Activated CD4-positive, alpha-beta T cell treated with anti-CD3 and anti-CD28 coated beads for 36 hours (primary cell): ENCODE measurements at regions of chr15 and their contacts with region 1.

Region 1: DNA sequence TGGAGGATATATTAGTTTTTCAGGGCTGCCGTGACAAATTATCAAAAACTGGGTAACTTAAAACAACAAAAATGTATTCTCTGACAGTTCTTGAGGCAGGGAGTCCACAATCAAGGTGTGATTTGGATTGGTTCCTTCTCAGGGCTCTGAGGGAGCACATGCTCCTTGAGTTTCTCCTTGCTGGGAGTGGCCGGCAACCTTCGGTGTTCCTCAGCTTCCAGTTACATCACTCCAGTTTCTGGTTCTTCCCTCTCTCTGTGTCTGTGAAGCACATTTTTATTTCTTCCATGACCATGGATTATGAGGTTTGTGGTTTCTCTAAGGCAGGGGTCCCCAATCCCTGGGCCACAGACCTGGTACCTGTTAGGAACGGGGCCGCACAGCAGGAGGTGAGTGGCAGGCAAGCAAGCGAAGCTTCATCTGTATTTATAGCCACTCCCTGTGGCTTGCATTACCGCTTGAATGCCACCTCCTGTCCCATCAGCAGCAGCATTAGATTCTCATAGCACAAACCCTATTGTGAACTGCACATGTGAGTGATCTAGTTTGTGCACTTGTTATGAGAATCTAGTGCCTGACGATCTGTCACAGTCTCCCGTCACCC is 24.3 kb downstream of the LRRC28 start:
- DNase-seq: no peak
- ATAC-seq: no peak
- H3K4me3 Mint-ChIP-seq: no peak overlapping the region
- H3K27ac Mint-ChIP-seq: no peak overlapping the region
- H3K4me1 Mint-ChIP-seq: peaks cover 23% of the 10 kb centered on the region
- H3K27me3 Mint-ChIP-seq: no peaks in the 10 kb centered on the region

Region 2: GRCh38 chr15:98794754-98795153 is 480.9 kb before region 1 on chr15:
- CTCF ChIA-PET with region 1: no interaction called
- POLR2A ChIA-PET with region 1: no interaction called
- intact Hi-C with region 1: no loop called
- DNase-seq: no peak
- ATAC-seq: no peak
- H3K4me3 Mint-ChIP-seq: no peak overlapping the region
- H3K27ac Mint-ChIP-seq: no peak overlapping the region
- H3K4me1 Mint-ChIP-seq: peaks cover 61% of the 10 kb centered on the region
- H3K27me3 Mint-ChIP-seq: no peaks in the 10 kb centered on the region

Region 3: GRCh38 chr15:99250494-99251435 is 24.9 kb before region 1 on chr15:
- CTCF ChIA-PET with region 1: interaction called, 43 read pairs
- POLR2A ChIA-PET with region 1: no interaction called
- intact Hi-C with region 1: no loop called
- DNase-seq: peak; percentile 98
- ATAC-seq: peak; percentile 99
- H3K4me3 Mint-ChIP-seq: no peak overlapping the region
- H3K27ac Mint-ChIP-seq: peak overlapping the region; percentile 95
- H3K4me1 Mint-ChIP-seq: peaks cover 22% of the 10 kb centered on the region
- H3K27me3 Mint-ChIP-seq: no peaks in the 10 kb centered on the region

Region 4: DNA sequence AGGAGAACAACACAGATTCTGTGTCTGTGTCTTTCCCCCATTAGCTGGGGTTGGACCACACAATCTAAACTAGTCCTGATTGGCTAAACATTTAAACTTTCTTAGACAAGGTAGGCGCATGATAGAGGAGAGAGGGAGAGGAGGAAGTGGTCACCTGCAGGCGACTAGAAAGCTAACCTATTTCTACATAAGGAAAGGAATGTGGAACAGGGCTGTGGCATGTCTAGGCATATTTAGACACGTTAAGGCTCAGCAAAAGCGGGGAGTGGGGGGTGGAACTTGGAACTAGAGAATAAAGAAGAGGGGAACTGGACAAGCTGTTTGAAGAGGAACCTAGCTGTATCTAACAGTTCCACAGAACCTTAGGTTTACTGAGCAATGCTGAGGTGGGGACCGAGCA is 11.5 kb before region 1 on chr15:
- CTCF ChIA-PET with region 1: interaction called, 43 read pairs
- POLR2A ChIA-PET with region 1: no interaction called
- intact Hi-C with region 1: no loop called
- DNase-seq: no peak
- ATAC-seq: no peak
- H3K4me3 Mint-ChIP-seq: no peak overlapping the region
- H3K27ac Mint-ChIP-seq: no peak overlapping the region
- H3K4me1 Mint-ChIP-seq: no peaks in the 10 kb centered on the region
- H3K27me3 Mint-ChIP-seq: no peaks in the 10 kb centered on the region

Region 5: DNA sequence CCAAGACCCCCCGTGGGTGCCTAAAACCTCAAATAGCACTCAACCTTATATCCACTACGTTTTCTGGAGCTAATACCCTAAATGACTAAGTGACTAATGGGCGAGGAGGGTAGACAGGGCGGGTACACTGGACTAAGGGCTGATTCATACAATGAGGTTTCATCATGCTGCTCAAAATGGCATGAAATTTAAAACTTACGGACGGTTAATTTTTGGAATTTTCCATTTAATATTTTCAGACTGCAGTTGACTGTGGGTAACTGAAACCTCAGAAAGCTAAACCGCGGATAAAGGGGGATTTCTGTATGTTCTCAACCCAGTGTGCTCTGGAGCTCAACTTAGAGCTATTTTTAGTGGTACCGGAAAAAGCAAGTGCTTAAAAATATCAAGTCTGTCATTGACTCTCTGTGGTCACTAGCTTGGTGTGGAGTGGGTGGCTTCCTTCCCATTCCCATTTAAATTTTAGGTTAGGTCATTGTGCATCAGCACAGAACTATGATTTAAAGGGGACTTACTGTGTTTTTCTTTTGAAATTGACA is 48.5 kb after region 1 on chr15:
- CTCF ChIA-PET with region 1: interaction called, 3 read pairs
- POLR2A ChIA-PET with region 1: no interaction called
- intact Hi-C with region 1: loop called in 1 of 2 experiments (anchors 2 kb)
- DNase-seq: peak; percentile 19
- ATAC-seq: peak; percentile 87
- H3K4me3 Mint-ChIP-seq: no peak overlapping the region
- H3K27ac Mint-ChIP-seq: no peak overlapping the region
- H3K4me1 Mint-ChIP-seq: peaks cover 8% of the 10 kb centered on the region
- H3K27me3 Mint-ChIP-seq: no peaks in the 10 kb centered on the region

Region 6: GRCh38 chr15:99371180-99372103 is 95.8 kb after region 1 on chr15:
- CTCF ChIA-PET with region 1: interaction called, 6 read pairs
- POLR2A ChIA-PET with region 1: no interaction called
- intact Hi-C with region 1: loop called (anchors 2 to 5 kb)
- DNase-seq: no peak
- ATAC-seq: peak; percentile 95
- H3K4me3 Mint-ChIP-seq: no peak overlapping the region
- H3K27ac Mint-ChIP-seq: peak overlapping the region; percentile 55
- H3K4me1 Mint-ChIP-seq: peaks cover 21% of the 10 kb centered on the region
- H3K27me3 Mint-ChIP-seq: no peaks in the 10 kb centered on the region

Region 7: GRCh38 chr15:99755692-99756409 is 480.2 kb after region 1 on chr15:
- CTCF ChIA-PET with region 1: interaction called, 40 read pairs
- POLR2A ChIA-PET with region 1: no interaction called
- intact Hi-C with region 1: loop called (anchors 1 kb)
- DNase-seq: peak; percentile 51
- ATAC-seq: peak; percentile 94
- H3K4me3 Mint-ChIP-seq: no peak overlapping the region
- H3K27ac Mint-ChIP-seq: no peak overlapping the region
- H3K4me1 Mint-ChIP-seq: no peaks in the 10 kb centered on the region
- H3K27me3 Mint-ChIP-seq: no peaks in the 10 kb centered on the region

Region 8: DNA sequence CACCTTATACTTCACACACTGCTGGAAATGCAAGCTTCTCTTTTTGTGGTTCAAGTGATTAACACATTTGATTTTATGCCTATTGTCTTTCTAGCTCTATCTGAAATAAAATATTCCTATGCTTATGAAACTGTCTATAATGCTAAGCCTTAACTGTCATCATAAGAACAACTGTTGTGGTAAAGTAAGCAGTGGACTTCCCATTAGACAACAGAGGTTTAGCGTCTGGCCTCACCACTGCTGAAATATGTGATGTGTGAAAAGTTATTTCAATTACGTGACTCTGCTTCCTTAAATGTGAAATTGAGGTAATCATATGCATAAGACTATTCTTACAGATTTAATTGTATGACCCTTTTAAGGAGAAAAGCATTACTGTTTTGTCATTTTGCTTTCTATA is 597.8 kb after region 1 on chr15:
- CTCF ChIA-PET with region 1: no interaction called
- POLR2A ChIA-PET with region 1: no interaction called
- intact Hi-C with region 1: no loop called
- DNase-seq: no peak
- ATAC-seq: no peak
- H3K4me3 Mint-ChIP-seq: no peak overlapping the region
- H3K27ac Mint-ChIP-seq: no peak overlapping the region
- H3K4me1 Mint-ChIP-seq: no peaks in the 10 kb centered on the region
- H3K27me3 Mint-ChIP-seq: no peaks in the 10 kb centered on the region